ENCODE measurements at regions of chr7 and their contacts with region 1.

Region 1: DNA sequence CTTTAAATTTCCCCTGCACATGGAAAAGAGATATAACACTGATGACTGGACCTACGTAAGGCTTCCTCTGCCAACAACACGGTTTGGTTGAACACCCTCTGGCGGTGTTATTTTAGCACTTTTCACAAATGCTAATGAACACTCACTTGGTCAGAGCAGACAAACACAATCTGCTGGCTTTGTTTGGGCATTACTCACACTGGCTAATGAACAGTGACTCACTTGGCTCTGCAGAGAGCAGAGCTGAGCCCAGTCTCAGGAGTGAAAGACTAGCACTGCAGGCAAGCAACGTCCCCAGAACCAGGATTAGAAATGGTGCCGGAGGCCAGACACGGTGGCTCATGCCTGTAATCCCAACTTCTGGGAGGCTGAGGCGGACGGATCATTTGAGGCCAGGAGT is 430.8 kb downstream of the PLXNA4 start:
- DNase-seq: peak; percentile 81 to 82
- ATAC-seq: peak; percentile 90
- H3K4me3 ChIP-seq: no peak overlapping the region
- H3K27ac ChIP-seq: no peak overlapping the region
- H3K4me1 ChIP-seq: no peaks in the 10 kb centered on the region
- H3K27me3 ChIP-seq: no peaks in the 10 kb centered on the region

Region 2: DNA sequence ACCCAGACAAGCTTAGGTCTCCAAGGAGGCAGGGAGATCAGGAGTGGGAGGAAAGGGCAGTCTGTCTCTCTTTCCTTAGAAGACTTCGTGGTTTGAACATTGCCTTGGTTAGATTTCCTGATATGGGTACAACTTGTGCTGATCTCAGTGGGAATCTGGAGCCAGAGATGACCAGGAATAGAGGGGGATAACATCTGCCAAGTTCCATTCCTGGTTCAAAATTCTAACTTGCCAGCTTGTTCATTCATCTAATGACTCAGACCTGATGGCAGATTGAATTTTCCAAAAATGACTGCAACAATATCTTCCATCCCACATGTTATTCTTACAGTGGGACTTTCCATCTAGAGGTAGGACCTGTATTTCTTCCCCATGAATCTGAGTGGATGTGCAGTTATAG is 194.7 kb before region 1 on chr7:
- intact Hi-C with region 1: loop called (anchors 5 kb)
- DNase-seq: no peak
- ATAC-seq: peak; percentile 60
- H3K4me3 ChIP-seq: no peak overlapping the region
- H3K27ac ChIP-seq: peak overlapping the region; percentile 82 to 98
- H3K4me1 ChIP-seq: peaks cover 3 to 8% of the 10 kb centered on the region in 2 donors
- H3K27me3 ChIP-seq: no peaks in the 10 kb centered on the region

Region 3: GRCh38 chr7:132019703-132020102 is 125.8 kb before region 1 on chr7:
- intact Hi-C with region 1: loop called in 1 of 2 experiments (anchors 5 kb)
- DNase-seq: no peak
- ATAC-seq: no peak
- H3K4me3 ChIP-seq: no peak overlapping the region
- H3K27ac ChIP-seq: peak overlapping the region in 1 of 2 donors; percentile 14
- H3K4me1 ChIP-seq: peaks cover 0 to 3% of the 10 kb centered on the region in 2 donors
- H3K27me3 ChIP-seq: no peaks in the 10 kb centered on the region

Region 4: DNA sequence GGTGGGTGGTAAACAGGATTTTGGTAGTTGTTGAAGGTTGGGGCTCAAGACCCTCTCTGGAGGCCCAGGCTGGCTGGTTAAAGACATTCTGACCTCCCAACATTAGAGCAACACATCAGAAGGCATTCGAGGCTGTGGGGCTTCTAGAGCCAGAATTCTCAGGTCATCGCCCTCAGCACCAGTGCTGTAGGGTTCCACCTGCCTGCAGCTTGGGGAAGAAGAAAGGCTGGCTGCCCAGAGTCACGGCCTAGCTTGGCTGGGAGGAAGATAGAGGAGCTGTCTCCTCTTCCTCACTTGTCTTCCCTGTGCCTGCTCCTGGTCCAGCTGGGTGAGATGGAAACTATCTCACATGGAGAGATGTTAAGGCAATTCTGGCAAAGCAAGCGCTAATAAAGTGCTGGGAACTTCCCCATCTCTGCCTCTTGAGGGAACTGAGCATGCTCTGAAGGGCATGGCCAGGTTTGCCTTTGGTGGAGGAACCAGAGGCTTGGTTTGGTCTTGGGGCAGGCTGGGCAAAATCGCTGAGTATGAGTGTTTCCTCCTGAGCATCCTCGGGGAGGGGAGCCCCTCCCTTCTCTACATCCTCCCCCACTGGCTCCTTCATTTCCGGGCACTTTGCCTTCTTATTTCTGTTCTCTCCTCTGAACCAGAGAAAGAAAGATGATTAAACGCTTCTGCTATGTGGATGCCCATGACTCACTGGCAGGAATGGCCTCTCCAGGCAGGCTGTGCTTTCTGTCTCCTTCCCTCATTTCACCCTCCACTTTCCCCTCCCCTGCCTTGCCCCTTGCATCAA is 80.1 kb before region 1 on chr7:
- intact Hi-C with region 1: loop called (anchors 1 to 5 kb)
- DNase-seq: peak; percentile 80 to 84
- ATAC-seq: peak; percentile 90
- H3K4me3 ChIP-seq: no peak overlapping the region
- H3K27ac ChIP-seq: peak overlapping the region; percentile 83 to 97
- H3K4me1 ChIP-seq: peaks cover 0 to 2% of the 10 kb centered on the region in 2 donors
- H3K27me3 ChIP-seq: no peaks in the 10 kb centered on the region

Region 5: GRCh38 chr7:132102942-132103341 is 42.5 kb before region 1 on chr7:
- intact Hi-C with region 1: no loop called
- DNase-seq: no peak
- ATAC-seq: no peak
- H3K4me3 ChIP-seq: no peak overlapping the region
- H3K27ac ChIP-seq: no peak overlapping the region
- H3K4me1 ChIP-seq: no peaks in the 10 kb centered on the region
- H3K27me3 ChIP-seq: no peaks in the 10 kb centered on the region

Region 6: GRCh38 chr7:132298790-132299189 is 153.3 kb after region 1 on chr7:
- intact Hi-C with region 1: loop called in 1 of 2 experiments (anchors 10 kb)
- DNase-seq: no peak
- ATAC-seq: no peak
- H3K4me3 ChIP-seq: no peak overlapping the region
- H3K27ac ChIP-seq: no peak overlapping the region
- H3K4me1 ChIP-seq: no peaks in the 10 kb centered on the region
- H3K27me3 ChIP-seq: no peaks in the 10 kb centered on the region